Naive thymus-derived CD4-positive, alpha-beta T cell (primary cell): ENCODE measurements at regions of chr2 and their contacts with region 1.

Region 1: DNA sequence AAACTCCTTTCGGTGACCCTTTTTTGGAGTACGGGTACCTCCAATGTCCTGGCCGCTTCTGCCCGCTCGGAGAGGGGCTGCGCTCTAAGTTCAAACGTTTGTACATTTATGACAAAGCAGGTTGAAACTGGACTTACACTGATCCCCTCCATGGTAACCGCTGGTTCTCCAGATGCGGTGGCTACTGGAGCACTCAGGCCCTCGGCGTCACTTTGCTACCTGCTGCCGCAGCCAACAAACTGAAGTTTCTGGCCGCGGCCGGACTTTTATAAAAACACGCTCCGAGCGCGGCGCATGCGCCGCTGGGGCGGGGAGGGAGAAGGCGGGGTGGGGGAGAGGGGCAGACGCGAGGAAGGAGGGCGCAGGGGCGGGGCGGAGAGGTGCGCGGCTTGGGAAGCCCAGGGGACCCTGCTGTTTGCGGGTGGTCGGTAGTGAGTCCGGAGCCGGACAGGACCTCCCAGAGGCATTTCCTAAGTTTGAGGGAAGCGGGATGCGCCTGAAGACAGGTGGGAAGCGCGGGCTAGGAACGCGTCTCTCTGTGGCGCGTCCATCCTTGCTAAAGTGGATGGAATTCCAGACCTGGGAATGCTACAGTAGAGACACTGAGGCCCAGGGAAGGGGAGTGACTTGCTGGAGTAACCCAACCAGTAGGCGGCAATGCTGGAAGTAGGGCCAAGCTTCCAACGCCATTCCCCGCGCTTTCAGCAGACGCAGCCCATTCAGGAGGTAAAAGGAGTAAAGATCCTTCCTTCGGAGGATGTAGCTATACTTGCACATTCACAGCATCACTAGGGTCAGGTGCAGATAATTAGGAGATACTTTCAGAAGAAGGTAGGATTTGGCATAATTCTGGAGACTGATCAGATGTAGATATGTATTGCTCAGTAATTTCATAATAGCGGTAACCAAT is at the start of gene CXCR4:
- DNase-seq: peak; percentile 87 to 97 (median 91)
- ATAC-seq: peak; percentile 51
- H3K4me3 ChIP-seq: peak within 1 kb of the TSS; percentile 89
- H3K4me3 Mint-ChIP-seq: peak within 1 kb of the TSS; percentile 84 to 100 (median 98)
- H3K27ac ChIP-seq: peak within 1 kb of the TSS; percentile 94
- H3K27ac Mint-ChIP-seq: peak within 1 kb of the TSS; percentile 98 to 100 (median 99)
- H3K4me1 ChIP-seq: peaks cover 40 to 44% of the 10 kb centered on the region in 2 donors
- H3K4me1 Mint-ChIP-seq: peaks cover 17 to 69% (median 64%) of the 10 kb centered on the region in 7 donors
- H3K27me3 ChIP-seq: no peaks in the 10 kb centered on the region
- H3K27me3 Mint-ChIP-seq: peaks cover 0 to 39% (median 0%) of the 10 kb centered on the region in 5 donors
- total RNA-seq, gene CXCR4: 239 to 1,323 (median 255) TPM

Region 2: GRCh38 chr2:135052042-135052876 is 1065.9 kb before region 1 on chr2 and contains the start of gene RAB3GAP1:
- CTCF ChIA-PET with region 1: no interaction called
- POLR2A ChIA-PET with region 1: no interaction called
- intact Hi-C with region 1: loop called (anchors 2 to 5 kb)
- DNase-seq: peak; percentile 76 to 96 (median 94)
- ATAC-seq: peak; percentile 93
- H3K4me3 ChIP-seq: peak within 1 kb of the TSS; percentile 69
- H3K4me3 Mint-ChIP-seq: peak within 1 kb of the TSS; percentile 94 to 99 (median 97)
- H3K27ac ChIP-seq: peak within 1 kb of the TSS; percentile 99
- H3K27ac Mint-ChIP-seq: peak within 1 kb of the TSS; percentile 98 to 100 (median 99)
- H3K4me1 ChIP-seq: peaks cover 0 to 22% of the 10 kb centered on the region in 2 donors
- H3K4me1 Mint-ChIP-seq: peaks cover 24 to 52% (median 48%) of the 10 kb centered on the region in 7 donors
- H3K27me3 ChIP-seq: no peaks in the 10 kb centered on the region
- H3K27me3 Mint-ChIP-seq: peaks cover 0 to 6% (median 0%) of the 10 kb centered on the region in 5 donors
- total RNA-seq, gene RAB3GAP1: 24.3 to 58.7 (median 42.9) TPM

Region 3: DNA sequence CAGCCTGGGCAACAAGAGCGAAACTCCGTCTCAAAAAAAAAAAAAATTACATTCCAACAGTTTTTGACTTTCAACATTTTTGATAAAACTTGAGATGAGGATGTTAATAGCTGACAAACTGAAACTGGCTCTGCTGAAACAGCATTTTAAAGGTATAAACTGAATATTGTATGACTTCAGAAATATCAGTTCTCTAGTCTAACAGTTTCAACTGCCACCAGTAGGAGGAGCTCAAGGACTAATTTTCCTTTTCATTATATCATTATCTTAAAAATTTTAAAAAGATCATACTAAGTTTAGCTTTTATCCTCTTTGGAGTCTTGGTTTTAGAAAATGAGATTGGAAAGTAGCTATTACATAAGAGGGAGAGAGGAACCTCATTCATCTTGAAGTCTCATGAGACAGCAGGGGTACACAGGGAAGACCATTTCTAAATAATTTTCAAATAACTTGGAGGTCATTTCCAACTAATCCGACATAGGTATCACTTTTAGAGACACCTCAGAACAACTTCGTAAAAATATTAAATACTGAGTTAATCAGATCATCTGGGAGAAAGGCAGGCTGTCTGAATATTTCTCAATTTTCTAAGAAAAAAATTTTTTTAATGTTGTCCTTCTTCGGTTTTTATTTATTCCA is 204.3 kb before region 1 on chr2:
- CTCF ChIA-PET with region 1: no interaction called
- POLR2A ChIA-PET with region 1: interaction called, 4 read pairs
- intact Hi-C with region 1: loop called (anchors 1 kb)
- DNase-seq: peak in 7 of 9 donors; percentile 36 to 67 (median 60)
- ATAC-seq: peak; percentile 63
- H3K4me3 ChIP-seq: no peak overlapping the region
- H3K4me3 Mint-ChIP-seq: no peak overlapping the region
- H3K27ac ChIP-seq: no peak overlapping the region
- H3K27ac Mint-ChIP-seq: peak overlapping the region in 6 of 9 donors; percentile 34 to 82 (median 55)
- H3K4me1 ChIP-seq: no peaks in the 10 kb centered on the region
- H3K4me1 Mint-ChIP-seq: peaks cover 0 to 12% (median 3%) of the 10 kb centered on the region in 7 donors
- H3K27me3 ChIP-seq: no peaks in the 10 kb centered on the region
- H3K27me3 Mint-ChIP-seq: no peaks in the 10 kb centered on the region

Region 4: DNA sequence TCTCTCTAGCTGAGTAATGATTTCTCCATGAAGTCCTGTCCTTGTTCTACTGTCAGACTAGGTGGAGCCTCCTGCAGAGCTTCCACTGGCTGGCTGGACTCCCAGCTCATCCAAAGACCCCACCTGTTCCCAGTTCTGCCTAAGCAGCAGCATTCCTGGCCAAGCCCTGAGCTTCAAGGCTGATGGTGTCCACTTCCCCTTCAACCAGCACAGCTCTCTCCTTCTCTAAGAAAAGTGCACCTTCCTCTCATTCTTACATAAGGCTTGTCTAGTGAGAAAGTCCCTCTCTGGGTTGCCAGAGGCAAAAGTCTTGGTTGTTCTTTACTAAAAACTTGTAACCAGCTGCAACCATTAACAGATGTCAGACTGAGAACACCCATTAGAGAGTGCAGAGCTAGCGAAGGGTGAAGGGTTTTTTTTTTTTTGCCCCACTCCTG is 59.1 kb before region 1 on chr2:
- CTCF ChIA-PET with region 1: no interaction called
- POLR2A ChIA-PET with region 1: interaction called, 4 read pairs
- intact Hi-C with region 1: loop called (anchors 1 to 2 kb)
- DNase-seq: no peak
- ATAC-seq: no peak
- H3K4me3 ChIP-seq: no peak overlapping the region
- H3K4me3 Mint-ChIP-seq: peak overlapping the region in 2 of 10 donors; percentile 43 to 50
- H3K27ac ChIP-seq: no peak overlapping the region
- H3K27ac Mint-ChIP-seq: peak overlapping the region in 5 of 9 donors; percentile 16 to 90 (median 65)
- H3K4me1 ChIP-seq: peaks cover 43 to 44% of the 10 kb centered on the region in 2 donors
- H3K4me1 Mint-ChIP-seq: peaks cover 46 to 90% (median 80%) of the 10 kb centered on the region in 7 donors
- H3K27me3 ChIP-seq: no peaks in the 10 kb centered on the region
- H3K27me3 Mint-ChIP-seq: no peaks in the 10 kb centered on the region

Region 5: DNA sequence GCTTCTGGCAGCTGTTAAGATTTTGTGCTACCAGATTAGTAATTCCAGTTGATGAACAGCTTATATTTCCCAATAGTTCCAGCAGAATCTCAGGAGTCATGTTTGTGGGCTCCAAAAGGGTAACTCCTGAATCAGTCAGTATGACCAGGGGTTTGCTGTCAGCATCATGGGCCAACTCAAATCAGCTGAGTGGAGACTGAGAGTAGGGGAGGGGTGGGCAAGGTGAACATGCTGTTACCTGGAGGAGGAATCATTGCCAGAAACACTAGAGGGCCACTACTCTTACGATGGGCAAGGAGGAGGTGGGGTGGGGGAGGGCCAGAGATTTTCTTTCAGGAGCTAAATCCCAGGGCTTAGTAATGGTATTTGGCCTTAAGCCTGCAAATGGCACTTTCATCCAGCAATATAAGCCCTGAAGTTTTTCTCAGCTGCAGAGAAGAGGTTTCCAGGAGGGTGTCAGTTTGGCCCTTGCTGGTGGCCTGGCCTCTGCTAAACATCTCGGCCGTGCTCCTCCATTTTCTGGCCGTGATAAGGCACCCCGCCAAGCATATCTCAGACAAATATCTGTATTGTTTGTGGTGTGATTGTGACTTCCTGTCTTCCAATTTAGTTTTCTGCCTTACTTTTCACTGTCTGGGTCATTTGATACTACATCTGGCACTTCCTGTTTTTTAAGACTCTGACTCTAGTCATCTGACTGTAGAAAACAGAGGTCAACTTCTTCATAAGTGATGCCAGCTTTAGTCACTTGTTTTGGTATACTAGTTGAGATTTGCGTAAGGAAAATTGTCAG is 120.3 kb after region 1 on chr2:
- CTCF ChIA-PET with region 1: no interaction called
- POLR2A ChIA-PET with region 1: interaction called, 11 read pairs
- intact Hi-C with region 1: loop called in 1 of 2 experiments (anchors 2 kb)
- DNase-seq: peak in 8 of 9 donors; percentile 33 to 75 (median 60)
- ATAC-seq: peak; percentile 84
- H3K4me3 ChIP-seq: no peak overlapping the region
- H3K4me3 Mint-ChIP-seq: peak overlapping the region; percentile 26 to 64 (median 48)
- H3K27ac ChIP-seq: peak overlapping the region; percentile 25
- H3K27ac Mint-ChIP-seq: peak overlapping the region; percentile 84 to 95 (median 90)
- H3K4me1 ChIP-seq: peaks cover 31 to 36% of the 10 kb centered on the region in 2 donors
- H3K4me1 Mint-ChIP-seq: peaks cover 32 to 60% (median 54%) of the 10 kb centered on the region in 7 donors
- H3K27me3 ChIP-seq: no peaks in the 10 kb centered on the region
- H3K27me3 Mint-ChIP-seq: no peaks in the 10 kb centered on the region

Region 6: DNA sequence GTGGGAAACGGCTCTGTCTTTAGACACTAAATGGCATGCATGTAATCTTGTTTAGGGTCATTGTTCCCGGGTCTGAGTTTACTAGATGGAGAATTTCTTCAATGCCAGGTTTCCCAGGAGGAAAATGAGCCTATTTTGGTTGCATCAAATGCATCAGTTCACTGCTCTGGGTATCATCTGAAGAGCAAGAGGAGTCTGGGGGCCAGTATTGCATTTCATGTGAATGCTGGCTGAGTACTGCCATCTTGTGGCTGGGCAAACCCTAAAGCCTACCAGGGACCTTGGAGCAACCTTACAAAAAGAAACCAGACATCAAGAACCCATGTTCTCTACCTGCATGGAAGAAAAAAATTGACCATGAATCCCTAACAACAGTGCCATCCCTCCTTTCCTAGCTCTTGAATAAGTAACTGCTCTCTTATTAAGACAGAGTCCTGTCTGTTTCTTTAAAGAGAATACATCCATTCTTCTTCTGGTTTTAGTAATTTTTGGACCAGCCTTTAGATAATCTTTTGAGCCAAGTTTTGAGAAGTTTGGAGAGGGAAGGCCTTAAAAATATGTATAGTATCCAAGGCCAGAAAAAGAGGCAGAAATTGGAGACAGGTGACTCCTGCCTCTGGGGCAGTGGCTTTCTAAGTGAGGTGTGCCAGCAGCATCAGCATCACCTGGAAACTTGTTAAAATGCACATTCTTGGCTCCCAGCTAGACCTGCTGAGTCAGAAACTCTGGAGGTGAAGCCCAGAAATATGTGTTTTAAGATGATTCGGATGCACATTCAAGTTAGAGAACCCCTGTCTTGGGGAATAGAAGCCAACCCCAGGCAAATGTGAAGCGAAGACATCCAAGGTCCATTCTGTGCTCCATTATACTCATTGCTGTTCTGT is 260.8 kb after region 1 on chr2:
- CTCF ChIA-PET with region 1: interaction called, 5 read pairs
- POLR2A ChIA-PET with region 1: interaction called, 10 read pairs
- intact Hi-C with region 1: loop called (anchors 1 kb)
- DNase-seq: peak; percentile 44 to 81 (median 75)
- ATAC-seq: peak; percentile 69
- H3K4me3 ChIP-seq: no peak overlapping the region
- H3K4me3 Mint-ChIP-seq: peak overlapping the region in 1 of 10 donors; percentile 12
- H3K27ac ChIP-seq: no peak overlapping the region
- H3K27ac Mint-ChIP-seq: peak overlapping the region in 6 of 9 donors; percentile 48 to 93 (median 82)
- H3K4me1 ChIP-seq: peaks cover 20 to 34% of the 10 kb centered on the region in 2 donors
- H3K4me1 Mint-ChIP-seq: peaks cover 32 to 84% (median 65%) of the 10 kb centered on the region in 7 donors
- H3K27me3 ChIP-seq: no peaks in the 10 kb centered on the region
- H3K27me3 Mint-ChIP-seq: no peaks in the 10 kb centered on the region